CD8-positive, alpha-beta memory T cell (primary cell): ENCODE measurements at regions of chr10 and their contacts with region 1.

Region 1: GRCh38 chr10:30241422-30242110 is 107.5 kb downstream of the MTPAP start:
- DNase-seq: no peak
- H3K4me3 ChIP-seq: no peak overlapping the region
- H3K4me3 Mint-ChIP-seq: no peak overlapping the region
- H3K27ac ChIP-seq: no peak overlapping the region
- H3K27ac Mint-ChIP-seq: no peak overlapping the region
- H3K4me1 ChIP-seq: no peaks in the 10 kb centered on the region
- H3K4me1 Mint-ChIP-seq: peaks cover 0 to 3% (median 0%) of the 10 kb centered on the region in 3 donors
- H3K27me3 ChIP-seq: no peaks in the 10 kb centered on the region
- H3K27me3 Mint-ChIP-seq: peaks cover 7 to 16% of the 10 kb centered on the region in 2 donors

Region 2: GRCh38 chr10:29998142-29998808 is 243.3 kb before region 1 on chr10:
- CTCF ChIA-PET with region 1: interaction called, 23 read pairs
- POLR2A ChIA-PET with region 1: no interaction called
- DNase-seq: peak; percentile 54 to 80 (median 64)
- H3K4me3 ChIP-seq: no peak overlapping the region
- H3K4me3 Mint-ChIP-seq: no peak overlapping the region
- H3K27ac ChIP-seq: no peak overlapping the region
- H3K27ac Mint-ChIP-seq: no peak overlapping the region
- H3K4me1 ChIP-seq: no peaks in the 10 kb centered on the region
- H3K4me1 Mint-ChIP-seq: peaks cover 0 to 11% (median 9%) of the 10 kb centered on the region in 3 donors
- H3K27me3 ChIP-seq: peaks cover 6% of the 10 kb centered on the region
- H3K27me3 Mint-ChIP-seq: peaks cover 36 to 63% of the 10 kb centered on the region in 2 donors

Region 3: DNA sequence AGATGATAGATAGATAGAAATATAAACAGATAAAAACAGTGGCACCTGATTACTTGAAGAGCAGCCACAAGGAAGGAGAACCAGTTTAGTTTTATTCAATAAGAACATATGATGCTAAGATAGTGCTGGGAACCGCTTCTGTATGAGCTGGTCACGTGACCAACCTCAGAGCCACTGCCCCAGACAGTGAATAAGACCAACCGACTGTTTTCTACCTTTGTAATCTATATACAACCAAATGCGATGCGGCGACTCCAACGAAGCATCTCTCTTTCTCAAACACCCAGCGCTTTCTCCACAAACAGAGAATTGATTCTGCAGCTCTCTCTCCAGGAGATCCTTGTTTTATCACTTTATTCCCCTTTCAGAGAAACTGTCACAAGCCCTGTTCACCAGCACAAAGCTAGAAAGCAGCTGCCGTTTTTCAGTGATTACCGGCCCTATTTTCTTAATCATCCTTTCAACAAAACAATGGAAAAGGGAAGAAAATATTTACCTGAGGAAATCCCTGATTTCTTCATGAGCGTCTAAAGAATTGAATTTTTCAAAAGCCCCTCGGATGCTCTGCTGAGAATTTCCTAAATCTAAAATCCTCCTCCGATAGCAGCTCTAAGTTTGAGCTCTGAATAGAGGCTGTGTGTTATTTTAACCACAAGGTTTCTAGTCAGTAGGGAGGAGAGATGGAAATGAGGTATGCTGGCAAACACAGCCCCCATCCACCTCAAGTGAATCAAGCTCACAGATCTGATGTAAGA is 126.5 kb before region 1 on chr10:
- CTCF ChIA-PET with region 1: no interaction called
- POLR2A ChIA-PET with region 1: no interaction called
- DNase-seq: no peak
- H3K4me3 ChIP-seq: no peak overlapping the region
- H3K4me3 Mint-ChIP-seq: no peak overlapping the region
- H3K27ac ChIP-seq: no peak overlapping the region
- H3K27ac Mint-ChIP-seq: no peak overlapping the region
- H3K4me1 ChIP-seq: no peaks in the 10 kb centered on the region
- H3K4me1 Mint-ChIP-seq: no peaks in the 10 kb centered on the region
- H3K27me3 ChIP-seq: no peaks in the 10 kb centered on the region
- H3K27me3 Mint-ChIP-seq: peaks cover 11 to 23% of the 10 kb centered on the region in 2 donors